ENCODE measurements at regions of chr9 and their contacts with region 1.

Region 1: GRCh38 chr9:116798521-116799021 is 111.5 kb downstream of the TRIM32 start:
- DNase-seq: no peak
- ATAC-seq: no peak
- H3K4me3 ChIP-seq: no peak overlapping the region
- H3K27ac ChIP-seq: no peak overlapping the region
- H3K4me1 ChIP-seq: no peaks in the 10 kb centered on the region
- H3K27me3 ChIP-seq: no peaks in the 10 kb centered on the region
- CTCF ChIP-seq: no peak
- EP300 ChIP-seq: no peak
- POLR2A ChIP-seq: no peak
- RAD21 ChIP-seq: no peak

Region 2: GRCh38 chr9:116837018-116837989 is 38.7 kb after region 1 on chr9:
- CTCF ChIA-PET with region 1: no interaction called
- POLR2A ChIA-PET with region 1: no interaction called
- in situ Hi-C with region 1: no loop called
- intact Hi-C with region 1: loop called (anchors 2 kb)
- DNase-seq: no peak
- ATAC-seq: no peak
- H3K4me3 ChIP-seq: no peak overlapping the region
- H3K27ac ChIP-seq: no peak overlapping the region
- H3K4me1 ChIP-seq: no peaks in the 10 kb centered on the region
- H3K27me3 ChIP-seq: no peaks in the 10 kb centered on the region
- CTCF ChIP-seq: no peak
- EP300 ChIP-seq: no peak
- POLR2A ChIP-seq: no peak
- RAD21 ChIP-seq: no peak

Measured in HepG2 (cell line).